ENCODE measurements at regions of chr6 and their contacts with region 1.

Region 1: DNA sequence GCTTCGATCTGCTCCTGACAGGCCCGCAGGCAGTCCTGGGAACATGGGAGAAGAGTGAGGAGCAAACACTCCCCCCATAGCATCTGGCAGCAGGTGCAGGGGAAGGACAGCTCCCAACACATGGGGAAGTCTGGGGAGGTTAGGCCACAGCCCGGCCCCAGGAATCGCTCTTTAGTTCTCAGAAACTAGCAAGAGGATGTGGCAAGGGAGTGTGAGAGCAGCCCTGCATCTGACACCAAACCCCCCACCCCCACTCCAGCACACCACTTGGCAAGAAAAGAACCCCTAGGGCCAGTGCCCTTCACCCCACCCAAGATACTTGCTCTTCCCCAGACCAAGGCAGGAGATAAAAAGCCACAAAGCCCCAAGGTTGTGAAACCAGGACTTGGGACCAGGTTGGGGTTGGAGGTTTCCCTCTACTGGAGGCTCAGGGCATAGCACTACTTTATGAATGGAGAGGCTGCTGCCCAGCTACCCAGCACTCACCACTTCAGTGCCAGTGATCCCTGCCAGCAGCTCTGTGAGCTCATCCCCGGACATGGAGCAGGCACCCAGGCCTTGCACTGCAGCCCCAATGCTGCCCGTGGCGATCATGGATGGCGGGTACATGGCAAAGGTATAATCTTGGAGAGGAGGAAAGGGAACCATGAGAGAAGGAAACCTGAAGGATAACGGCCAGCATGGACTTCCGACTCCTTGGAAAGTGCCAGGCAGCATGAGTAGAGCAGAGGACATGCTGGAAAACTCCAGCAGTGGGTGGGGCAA is 5.4 kb downstream of the CCND3 start:
- H3K4me3 Mint-ChIP-seq: peak overlapping the region; percentile 66
- H3K27ac Mint-ChIP-seq: peak overlapping the region; percentile 74
- H3K4me1 Mint-ChIP-seq: peaks cover 66% of the 10 kb centered on the region
- H3K27me3 Mint-ChIP-seq: no peaks in the 10 kb centered on the region

Region 2: GRCh38 chr6:41846666-41847237 is 89.5 kb before region 1 on chr6:
- intact Hi-C with region 1: loop called (anchors 2 kb)
- H3K4me3 Mint-ChIP-seq: no peak overlapping the region
- H3K27ac Mint-ChIP-seq: no peak overlapping the region
- H3K4me1 Mint-ChIP-seq: no peaks in the 10 kb centered on the region
- H3K27me3 Mint-ChIP-seq: no peaks in the 10 kb centered on the region

Region 3: DNA sequence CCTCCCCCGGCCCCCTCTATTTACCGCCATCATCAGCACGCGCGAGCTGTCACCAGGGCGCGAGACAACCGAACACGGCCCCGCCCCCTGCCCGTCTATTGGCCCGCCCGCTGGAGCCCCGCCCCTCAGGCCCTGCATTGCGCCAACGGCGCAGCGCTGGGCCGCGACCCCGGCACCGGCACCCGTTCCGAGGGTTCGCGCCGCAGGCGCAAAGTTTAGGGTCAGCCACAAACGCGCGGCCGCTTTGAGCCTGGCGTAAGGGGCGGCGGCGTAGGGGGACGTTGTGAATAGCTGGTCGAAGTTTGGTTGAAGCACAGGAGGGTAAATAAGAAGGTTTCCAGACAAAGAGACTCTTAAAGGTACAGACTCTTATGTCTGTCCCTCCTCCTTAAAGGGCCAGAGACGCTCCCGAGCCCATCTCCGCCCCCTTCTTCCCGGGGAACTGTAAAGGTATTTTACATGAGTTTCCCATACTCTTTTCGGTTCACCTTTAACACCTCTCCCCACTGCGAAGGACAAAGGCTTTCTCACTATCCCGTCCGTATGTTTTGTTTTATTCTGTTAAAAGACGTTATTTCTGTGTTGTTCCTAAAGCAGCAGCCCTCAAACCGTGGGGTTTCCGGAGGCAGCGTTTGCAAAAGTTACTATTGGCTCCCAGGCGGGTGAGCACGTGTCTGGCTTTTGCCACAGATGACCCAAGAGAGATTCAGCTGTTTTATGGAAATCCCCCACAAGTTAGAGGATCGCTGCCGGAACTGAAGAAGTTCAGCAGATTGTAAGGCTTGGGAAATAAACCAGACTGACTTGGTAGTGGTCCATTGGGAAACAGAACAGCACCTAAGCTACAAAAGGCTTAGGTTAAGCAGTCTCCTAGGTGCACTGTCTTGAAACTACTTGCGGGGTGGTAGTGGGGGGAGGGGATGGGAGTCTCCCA is 40.7 kb before region 1 on chr6 and contains the start of gene USP49:
- intact Hi-C with region 1: loop called (anchors 5 kb)
- H3K4me3 Mint-ChIP-seq: no peak within 1 kb of the TSS
- H3K27ac Mint-ChIP-seq: no peak within 1 kb of the TSS
- H3K4me1 Mint-ChIP-seq: peaks cover 12% of the 10 kb centered on the region
- H3K27me3 Mint-ChIP-seq: no peaks in the 10 kb centered on the region

Region 4: GRCh38 chr6:41920921-41921711 is 15.1 kb before region 1 on chr6 and contains the starts of genes BYSL and MED20:
- intact Hi-C with region 1: loop called (anchors 2 kb)
- H3K4me3 Mint-ChIP-seq: peak within 1 kb of the TSS; percentile 99
- H3K27ac Mint-ChIP-seq: peak within 1 kb of the TSS; percentile 99
- H3K4me1 Mint-ChIP-seq: peaks cover 60% of the 10 kb centered on the region
- H3K27me3 Mint-ChIP-seq: no peaks in the 10 kb centered on the region

Region 5: GRCh38 chr6:42043787-42044475 is 107.7 kb after region 1 on chr6:
- intact Hi-C with region 1: loop called (anchors 5 kb)
- H3K4me3 Mint-ChIP-seq: no peak overlapping the region
- H3K27ac Mint-ChIP-seq: no peak overlapping the region
- H3K4me1 Mint-ChIP-seq: peaks cover 57% of the 10 kb centered on the region
- H3K27me3 Mint-ChIP-seq: peaks cover 13% of the 10 kb centered on the region

Measured in dendritic cell treated with granulocyte-macrophage colony-stimulating factor and Interleukin-4, amounts not matched to agents 40 ng/mL and 50 ng/mL, for 4 days (primary cell).